ENCODE measurements at regions of chr5 and their contacts with region 1.

Region 1: DNA sequence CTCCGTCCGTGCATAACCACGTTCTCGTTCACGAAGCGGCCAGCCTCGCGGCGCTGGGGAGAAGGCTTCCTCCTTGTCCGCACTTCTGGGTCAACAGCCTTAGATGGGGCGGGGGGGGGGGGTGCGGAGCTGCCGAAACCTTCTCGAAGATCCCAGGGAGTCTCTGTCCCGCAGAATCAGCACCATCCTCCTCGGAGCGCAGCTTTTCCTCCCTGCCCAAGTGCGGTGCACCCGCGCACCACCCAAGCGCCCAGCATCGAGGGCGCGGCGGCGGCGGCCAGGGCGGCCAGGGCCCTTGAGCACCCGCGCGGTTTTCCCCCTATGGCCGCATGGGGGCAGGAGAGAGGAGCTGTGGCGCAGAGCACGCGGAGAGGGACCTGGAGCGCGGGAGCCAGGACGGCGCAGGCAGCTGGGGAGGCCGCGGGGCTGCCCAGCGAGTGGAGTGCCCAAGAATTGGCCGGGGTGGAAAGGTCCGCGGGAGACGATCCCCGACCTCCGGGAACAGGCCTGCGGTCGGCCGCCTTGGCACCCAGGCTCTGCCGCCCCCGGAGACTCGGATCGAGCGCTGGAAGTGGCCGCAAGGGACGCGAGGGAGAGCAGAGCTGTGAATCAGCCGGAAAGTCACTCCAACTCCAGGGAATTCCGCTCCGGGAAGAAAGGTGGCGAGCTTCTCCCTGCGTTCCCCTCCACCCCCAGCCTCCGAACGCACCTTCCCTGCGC is 43.1 kb downstream of the TMEM174 start:
- DNase-seq: peak; percentile 86
- H3K4me3 Mint-ChIP-seq: peak overlapping the region; percentile 73
- H3K27ac Mint-ChIP-seq: no peak overlapping the region
- H3K4me1 Mint-ChIP-seq: peaks cover 14% of the 10 kb centered on the region
- H3K27me3 Mint-ChIP-seq: no peaks in the 10 kb centered on the region
- CTCF ChIP-seq: peak; percentile 85

Region 2: DNA sequence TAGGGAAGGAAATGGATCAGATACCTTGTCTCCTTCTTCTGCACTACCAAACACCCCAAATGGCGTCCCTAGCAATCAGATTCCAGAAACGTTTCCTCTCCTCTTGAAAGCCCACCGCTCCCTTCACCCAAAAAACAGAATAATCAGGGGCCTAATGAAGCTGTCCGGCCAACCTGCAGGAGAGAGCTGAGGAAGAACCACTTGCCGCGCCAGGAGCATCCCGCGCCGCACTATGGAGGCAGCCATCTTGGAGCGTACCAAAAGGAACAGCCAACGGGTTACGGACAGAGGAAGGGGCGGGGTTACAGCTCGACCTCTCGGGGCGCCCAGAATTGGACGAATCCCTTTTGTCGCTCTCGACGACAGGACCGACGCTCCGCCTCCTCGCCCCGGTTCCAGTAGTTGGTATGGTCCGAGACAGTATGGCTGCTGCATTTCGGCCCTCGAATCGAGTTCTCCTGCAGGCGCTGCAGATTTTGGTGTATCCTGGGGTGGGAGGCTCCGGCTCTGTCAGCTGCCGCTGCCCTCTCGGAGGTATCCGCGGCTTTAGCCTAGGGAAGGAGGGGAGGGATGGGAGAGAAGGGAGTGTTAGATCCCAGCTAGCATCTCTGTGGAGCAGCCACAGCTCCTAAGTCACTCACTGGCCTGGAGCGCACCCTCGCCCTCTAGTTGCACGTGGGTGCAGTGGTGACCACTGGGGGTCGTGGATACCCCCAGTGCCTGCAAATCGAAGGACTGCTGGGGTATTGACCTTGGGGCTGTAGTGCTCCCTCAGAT is 895.9 kb before region 1 on chr5 and contains the starts of genes MRPS27 and PTCD2:
- CTCF ChIA-PET with region 1: no interaction called
- POLR2A ChIA-PET with region 1: no interaction called
- intact Hi-C with region 1: no loop called
- DNase-seq: peak; percentile 98
- H3K4me3 Mint-ChIP-seq: peak within 1 kb of the TSS; percentile 96
- H3K27ac Mint-ChIP-seq: peak within 1 kb of the TSS; percentile 87
- H3K4me1 Mint-ChIP-seq: peaks cover 19% of the 10 kb centered on the region
- H3K27me3 Mint-ChIP-seq: no peaks in the 10 kb centered on the region
- CTCF ChIP-seq: no peak
- total RNA-seq, gene MRPS27: 60.8 and 68.5 TPM in 2 replicates
- total RNA-seq, gene PTCD2: 20.3 and 20.6 TPM in 2 replicates

Region 3: DNA sequence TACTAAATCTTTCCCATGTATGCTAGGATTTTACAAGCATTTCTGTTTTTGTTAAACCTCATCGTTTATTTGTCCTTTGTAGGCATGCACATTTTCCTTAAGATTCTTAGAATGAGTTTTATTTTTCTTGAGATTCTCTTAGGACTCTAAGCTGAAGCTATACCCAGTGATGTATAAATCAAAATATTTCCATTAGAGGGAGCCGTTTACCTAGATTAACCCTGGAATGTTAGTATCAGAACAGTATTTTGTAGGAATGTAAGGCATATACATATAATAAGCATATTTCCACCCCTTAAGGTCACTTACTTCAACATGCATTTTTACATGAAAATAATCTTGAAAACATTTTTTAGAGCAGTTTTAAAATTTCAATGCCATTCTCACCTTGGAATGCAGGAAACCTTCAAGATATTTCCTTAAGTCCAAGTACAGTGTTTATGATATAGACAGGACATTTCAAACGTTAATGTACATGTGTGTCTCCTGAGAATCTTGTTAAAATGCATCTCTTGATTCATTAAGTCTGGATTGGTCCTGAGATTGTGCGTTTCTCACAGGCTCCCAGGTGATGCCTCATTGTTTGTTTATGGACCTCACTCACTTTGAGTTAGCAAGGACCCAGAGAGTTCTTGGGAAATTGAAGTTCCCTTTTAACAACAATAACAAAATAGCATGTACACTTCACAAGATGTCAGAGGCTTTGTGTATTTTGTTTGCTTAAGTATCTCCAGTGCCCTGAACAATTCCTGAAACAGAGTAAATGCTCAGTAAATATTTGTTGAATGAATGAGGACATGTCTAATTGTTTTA is 295.2 kb before region 1 on chr5:
- CTCF ChIA-PET with region 1: no interaction called
- POLR2A ChIA-PET with region 1: no interaction called
- intact Hi-C with region 1: loop called (anchors 5 kb)
- DNase-seq: peak; percentile 45
- H3K4me3 Mint-ChIP-seq: no peak overlapping the region
- H3K27ac Mint-ChIP-seq: no peak overlapping the region
- H3K4me1 Mint-ChIP-seq: no peaks in the 10 kb centered on the region
- H3K27me3 Mint-ChIP-seq: no peaks in the 10 kb centered on the region
- CTCF ChIP-seq: peak; percentile 38

Region 4: DNA sequence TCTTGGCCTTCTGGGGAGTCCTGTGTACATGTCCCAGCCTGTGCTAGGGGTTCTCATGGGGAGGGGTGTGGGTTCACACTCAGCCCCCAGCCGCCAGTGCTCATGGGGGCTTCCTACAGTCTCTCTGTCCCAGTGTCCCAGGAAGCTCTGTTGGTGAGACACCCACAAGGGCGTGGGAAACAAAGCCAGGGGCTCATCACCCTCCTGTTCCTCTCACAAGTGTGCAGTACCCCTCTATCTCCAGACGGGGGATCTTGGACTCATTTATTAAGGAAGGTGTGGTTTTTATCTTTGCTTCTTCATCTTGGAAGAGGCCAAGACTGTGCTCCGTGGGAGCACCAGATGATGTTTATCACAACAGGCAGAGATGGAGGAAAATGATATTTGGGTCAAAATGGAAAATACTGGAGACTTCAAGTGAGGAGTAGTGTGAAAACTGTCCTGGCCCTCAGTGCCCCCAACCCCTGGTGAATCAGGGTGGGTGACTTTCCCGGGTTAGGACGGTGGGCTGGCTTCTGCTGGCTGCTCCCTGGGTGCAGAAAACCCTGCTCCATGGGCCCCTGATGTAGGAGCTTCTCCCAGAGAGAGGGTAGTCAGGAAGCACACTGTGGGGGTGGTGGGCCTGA is 80.5 kb before region 1 on chr5:
- CTCF ChIA-PET with region 1: interaction called, 4 read pairs
- POLR2A ChIA-PET with region 1: no interaction called
- intact Hi-C with region 1: loop called (anchors 10 kb)
- DNase-seq: peak; percentile 68
- H3K4me3 Mint-ChIP-seq: no peak overlapping the region
- H3K27ac Mint-ChIP-seq: no peak overlapping the region
- H3K4me1 Mint-ChIP-seq: peaks cover 6% of the 10 kb centered on the region
- H3K27me3 Mint-ChIP-seq: no peaks in the 10 kb centered on the region
- CTCF ChIP-seq: peak; percentile 20

Region 5: DNA sequence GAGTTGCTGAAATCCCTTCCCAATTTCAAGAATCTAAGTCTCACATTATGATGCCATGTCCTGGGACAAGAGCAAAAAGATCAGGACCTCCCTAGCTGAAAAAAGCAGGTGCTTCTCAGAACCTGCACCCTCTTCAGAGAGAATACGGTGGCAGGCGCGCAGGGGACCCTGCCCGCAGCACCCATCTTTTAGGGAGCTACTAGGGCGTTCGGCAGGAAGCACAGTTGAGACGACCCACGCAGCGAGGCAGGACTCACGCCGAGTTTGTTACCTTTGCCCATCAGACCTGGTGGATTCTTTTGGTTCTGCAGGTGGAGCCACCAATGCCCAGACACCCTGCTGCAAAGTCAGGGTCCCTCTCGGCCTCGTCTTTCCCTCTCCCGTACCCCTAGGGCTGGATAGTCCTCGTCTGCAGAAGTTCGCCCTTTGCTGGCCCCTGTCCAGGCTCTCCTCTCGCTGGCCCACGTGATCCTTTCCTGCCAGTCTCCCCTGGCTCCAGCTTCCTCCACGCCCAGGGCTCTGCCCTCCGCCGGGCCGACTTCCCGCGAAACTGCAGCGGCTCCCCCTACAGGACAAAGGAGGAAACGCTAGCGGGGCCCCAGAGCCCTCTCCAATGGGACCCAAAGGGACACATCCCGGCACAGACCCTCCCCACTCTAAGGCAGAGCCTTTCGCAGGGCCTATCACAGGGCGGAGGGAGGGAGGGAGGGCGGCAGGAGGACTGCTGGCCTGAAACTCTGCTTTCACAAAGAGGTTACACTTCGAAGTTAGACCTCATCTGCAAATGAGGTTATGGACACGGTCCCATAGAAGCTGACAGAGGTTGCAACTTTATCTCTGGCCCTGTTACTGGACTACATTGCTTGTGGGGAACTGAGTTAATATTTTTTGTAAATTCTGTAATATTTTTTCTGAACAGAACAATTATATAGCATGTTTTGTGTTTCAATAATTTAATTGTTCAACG is 14.2 kb before region 1 on chr5:
- CTCF ChIA-PET with region 1: interaction called, 14 read pairs
- POLR2A ChIA-PET with region 1: interaction called, 3 read pairs
- intact Hi-C with region 1: no loop called
- DNase-seq: peak; percentile 74
- H3K4me3 Mint-ChIP-seq: peak overlapping the region; percentile 26
- H3K27ac Mint-ChIP-seq: no peak overlapping the region
- H3K4me1 Mint-ChIP-seq: no peaks in the 10 kb centered on the region
- H3K27me3 Mint-ChIP-seq: no peaks in the 10 kb centered on the region
- CTCF ChIP-seq: peak; percentile 80

Region 6: GRCh38 chr5:73265641-73266040 is 49.6 kb after region 1 on chr5:
- CTCF ChIA-PET with region 1: interaction called, 11 read pairs
- POLR2A ChIA-PET with region 1: interaction called, 4 read pairs
- intact Hi-C with region 1: no loop called
- DNase-seq: no peak
- H3K4me3 Mint-ChIP-seq: no peak overlapping the region
- H3K27ac Mint-ChIP-seq: peak overlapping the region; percentile 7
- H3K4me1 Mint-ChIP-seq: peaks cover 11% of the 10 kb centered on the region
- H3K27me3 Mint-ChIP-seq: no peaks in the 10 kb centered on the region
- CTCF ChIP-seq: no peak

Region 7: DNA sequence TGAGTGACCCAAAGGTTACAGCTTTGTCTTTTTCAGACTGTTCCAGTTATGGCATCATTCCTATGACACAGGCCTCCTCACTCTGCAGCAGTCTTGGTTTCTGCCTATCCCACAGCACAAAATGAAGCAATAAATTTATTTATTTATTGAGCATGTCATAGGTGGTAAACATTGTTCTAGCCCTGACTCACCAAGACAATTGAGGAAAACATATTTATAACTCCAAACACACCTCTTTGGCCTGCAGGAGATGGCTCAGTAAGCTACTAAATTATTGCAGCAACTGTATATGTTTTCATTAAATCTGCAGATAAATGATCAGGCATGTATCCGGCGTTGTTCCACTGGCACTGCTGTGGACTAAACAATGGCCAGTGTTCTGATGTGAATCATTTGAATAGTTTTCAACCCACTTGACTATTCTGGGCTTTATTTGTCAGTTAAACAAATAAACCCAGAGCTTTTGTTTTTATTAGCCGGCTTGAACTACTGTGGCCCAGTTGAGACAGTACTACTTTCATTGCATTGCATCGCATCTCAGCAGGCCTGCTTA is 149.3 kb after region 1 on chr5:
- CTCF ChIA-PET with region 1: interaction called, 63 read pairs
- POLR2A ChIA-PET with region 1: interaction called, 21 read pairs
- intact Hi-C with region 1: loop called (anchors 1 kb)
- DNase-seq: peak; percentile 69
- H3K4me3 Mint-ChIP-seq: no peak overlapping the region
- H3K27ac Mint-ChIP-seq: peak overlapping the region; percentile 71
- H3K4me1 Mint-ChIP-seq: peaks cover 33% of the 10 kb centered on the region
- H3K27me3 Mint-ChIP-seq: no peaks in the 10 kb centered on the region
- CTCF ChIP-seq: no peak

Region 8: GRCh38 chr5:73454351-73455036 is 238.4 kb after region 1 on chr5:
- CTCF ChIA-PET with region 1: interaction called, 95 read pairs
- POLR2A ChIA-PET with region 1: interaction called, 34 read pairs
- intact Hi-C with region 1: no loop called
- DNase-seq: peak; percentile 85
- H3K4me3 Mint-ChIP-seq: no peak overlapping the region
- H3K27ac Mint-ChIP-seq: no peak overlapping the region
- H3K4me1 Mint-ChIP-seq: peaks cover 5% of the 10 kb centered on the region
- H3K27me3 Mint-ChIP-seq: no peaks in the 10 kb centered on the region
- CTCF ChIP-seq: peak; percentile 70